ENCODE measurements at regions of chr19 and their contacts with region 1.

Region 1: GRCh38 chr19:3210347-3211017 is 14.0 kb upstream of the CELF5 start:
- DNase-seq: peak; percentile 34 to 96
- H3K4me3 ChIP-seq: no peak overlapping the region
- H3K27ac ChIP-seq: no peak overlapping the region
- H3K4me1 ChIP-seq: peaks cover 0 to 5% (median 0%) of the 10 kb centered on the region in 4 experiments; a peak in 2 of 7 replicates
- H3K27me3 ChIP-seq: no peaks in the 10 kb centered on the region
- CTCF ChIP-seq: peak; percentile 79 to 93 (median 92)
- EP300 ChIP-seq: no peak
- POLR2A ChIP-seq: no peak
- RAD21 ChIP-seq: peak; percentile 35 to 46; a peak in 3 of 4 replicates

Region 2: GRCh38 chr19:3175781-3176602 is 34.5 kb before region 1 on chr19:
- CTCF ChIA-PET with region 1: no interaction called
- POLR2A ChIA-PET with region 1: no interaction called
- DNase-seq: no peak
- H3K4me3 ChIP-seq: no peak overlapping the region
- H3K27ac ChIP-seq: no peak overlapping the region
- H3K4me1 ChIP-seq: no peaks in the 10 kb centered on the region
- H3K27me3 ChIP-seq: 0 out of 7 replicates have a peak, but pooled peaks cover 0 to 2% (median 0%) of the 10 kb centered on the region in 4 experiments
- CTCF ChIP-seq: no peak
- EP300 ChIP-seq: no peak
- POLR2A ChIP-seq: no peak
- RAD21 ChIP-seq: no peak

Region 3: GRCh38 chr19:3188627-3189510 is 21.6 kb before region 1 on chr19:
- CTCF ChIA-PET with region 1: interaction called, 14 read pairs
- POLR2A ChIA-PET with region 1: interaction called, 7 read pairs
- DNase-seq: no peak
- H3K4me3 ChIP-seq: no peak overlapping the region
- H3K27ac ChIP-seq: no peak overlapping the region
- H3K4me1 ChIP-seq: peaks cover 0 to 16% (median 10%) of the 10 kb centered on the region in 4 experiments; a peak in 6 of 7 replicates
- H3K27me3 ChIP-seq: no peaks in the 10 kb centered on the region
- CTCF ChIP-seq: no peak
- EP300 ChIP-seq: no peak
- POLR2A ChIP-seq: no peak
- RAD21 ChIP-seq: no peak

Region 4: DNA sequence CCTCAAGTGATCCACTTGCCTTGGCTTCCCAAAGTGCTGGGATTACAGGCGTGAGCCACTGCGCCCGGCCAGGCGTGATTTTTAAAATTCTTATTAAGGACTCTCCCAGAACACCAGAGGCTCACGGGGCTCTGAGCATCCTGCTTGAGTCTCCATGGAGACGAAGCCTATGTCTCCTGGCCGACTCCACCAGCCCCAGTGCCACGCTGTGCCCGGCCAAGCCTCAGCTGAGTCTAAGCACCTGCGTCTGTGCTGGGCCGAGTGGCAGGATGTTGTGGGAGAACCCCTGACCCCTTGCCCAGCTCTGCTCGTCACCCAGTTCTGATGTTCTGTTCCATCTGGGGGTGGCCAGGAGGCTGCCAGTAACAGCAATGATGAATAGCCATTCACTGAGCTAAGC is 10.1 kb after region 1 on chr19:
- CTCF ChIA-PET with region 1: interaction called, 19 read pairs
- POLR2A ChIA-PET with region 1: interaction called, 5 read pairs
- DNase-seq: no peak
- H3K4me3 ChIP-seq: no peak overlapping the region
- H3K27ac ChIP-seq: no peak overlapping the region
- H3K4me1 ChIP-seq: no peaks in the 10 kb centered on the region; a peak in 1 of 7 replicates
- H3K27me3 ChIP-seq: 0 out of 7 replicates have a peak, but pooled peaks cover 0 to 3% (median 0%) of the 10 kb centered on the region in 4 experiments
- CTCF ChIP-seq: no peak
- EP300 ChIP-seq: no peak
- POLR2A ChIP-seq: no peak
- RAD21 ChIP-seq: no peak